ENCODE measurements at regions of chr10 and their contacts with region 1.

Region 1: DNA sequence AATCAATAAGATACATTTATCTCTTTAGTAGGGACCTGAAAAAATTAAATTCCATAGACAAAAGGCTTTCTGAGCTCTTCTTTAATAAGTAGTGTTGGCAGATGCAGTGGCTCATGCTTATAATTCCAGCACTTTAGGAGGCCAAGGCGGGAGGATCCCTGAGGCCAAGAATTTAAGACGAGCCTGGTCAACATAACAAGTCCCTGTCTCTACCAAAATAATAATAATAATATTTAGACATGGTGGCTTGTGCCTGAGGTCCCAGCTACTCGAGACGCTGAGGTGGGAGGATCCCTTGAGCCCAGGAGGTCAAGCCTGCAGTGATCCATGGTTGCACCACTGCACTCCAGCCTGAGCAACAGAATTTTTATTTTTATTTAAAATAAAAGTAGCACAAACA is 280.8 kb downstream of the ADK start:
- DNase-seq: no peak
- H3K4me3 ChIP-seq: no peak overlapping the region
- H3K27me3 ChIP-seq: no peaks in the 10 kb centered on the region
- CTCF ChIP-seq: no peak

Region 2: GRCh38 chr10:74058658-74059057 is 373.2 kb before region 1 on chr10:
- CTCF ChIA-PET with region 1: no interaction called
- POLR2A ChIA-PET with region 1: no interaction called
- DNase-seq: no peak
- H3K4me3 ChIP-seq: no peak overlapping the region
- H3K27me3 ChIP-seq: no peaks in the 10 kb centered on the region
- CTCF ChIP-seq: no peak

Region 3: DNA sequence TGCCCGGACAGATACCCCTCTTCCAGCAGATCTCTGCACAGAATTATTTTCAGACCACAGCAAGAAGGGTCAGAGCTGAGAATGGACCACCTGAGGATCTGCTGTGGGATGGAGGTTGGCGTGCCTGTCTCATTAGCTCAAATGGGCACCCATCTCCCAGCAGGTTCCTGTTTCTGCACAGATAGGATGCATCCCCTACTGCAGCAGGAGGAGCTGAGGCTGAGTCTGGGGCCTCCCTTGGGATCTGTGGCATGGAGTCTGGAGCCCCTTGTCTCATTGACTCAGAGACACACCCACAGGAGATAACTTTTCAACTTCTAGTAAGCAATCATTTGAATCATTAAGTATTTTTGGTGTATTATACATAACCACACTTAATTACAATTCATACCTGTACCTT is 68.1 kb before region 1 on chr10:
- CTCF ChIA-PET with region 1: no interaction called
- POLR2A ChIA-PET with region 1: no interaction called
- DNase-seq: no peak
- H3K4me3 ChIP-seq: no peak overlapping the region
- H3K27me3 ChIP-seq: no peaks in the 10 kb centered on the region
- CTCF ChIP-seq: no peak

Region 4: DNA sequence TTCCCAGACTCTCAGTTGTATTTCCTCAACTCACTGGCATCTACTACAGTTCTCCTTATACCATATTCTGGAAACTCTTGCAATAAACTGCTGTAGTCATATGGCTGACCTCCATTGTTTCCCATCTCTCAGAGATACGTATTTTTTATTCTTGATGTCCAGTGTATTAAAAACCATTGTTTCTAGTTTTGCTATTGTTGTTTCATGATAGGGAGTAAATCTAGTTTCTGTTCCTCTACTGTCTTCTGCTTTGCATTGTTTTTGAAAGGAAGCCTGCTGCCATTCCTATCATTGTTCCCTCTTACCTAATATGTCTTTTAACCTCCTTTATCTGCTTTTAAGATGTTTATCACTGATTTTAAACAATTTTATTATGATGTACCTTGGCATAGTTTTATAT is 25.8 kb before region 1 on chr10:
- CTCF ChIA-PET with region 1: no interaction called
- POLR2A ChIA-PET with region 1: no interaction called
- DNase-seq: no peak
- H3K4me3 ChIP-seq: no peak overlapping the region
- H3K27me3 ChIP-seq: no peaks in the 10 kb centered on the region
- CTCF ChIP-seq: no peak

Region 5: GRCh38 chr10:74419958-74420375 is 11.8 kb before region 1 on chr10:
- CTCF ChIA-PET with region 1: interaction called, 11 read pairs
- POLR2A ChIA-PET with region 1: interaction called, 8 read pairs
- DNase-seq: no peak
- H3K4me3 ChIP-seq: no peak overlapping the region
- H3K27me3 ChIP-seq: no peaks in the 10 kb centered on the region
- CTCF ChIP-seq: peak; percentile 34; the same call in 1 of the 2 replicates